Adrenal gland (tissue), 19 donors: ENCODE measurements at regions of chr5 and their contacts with region 1.

Region 1: GRCh38 chr5:165209086-165209727 is 1703.8 kb downstream of the MAT2B start:
- DNase-seq: no peak
- H3K4me3 ChIP-seq: no peak overlapping the region
- H3K27ac ChIP-seq: no peak overlapping the region
- H3K4me1 ChIP-seq: no peaks in the 10 kb centered on the region
- H3K27me3 ChIP-seq: no peaks in the 10 kb centered on the region
- CTCF ChIP-seq: peak; percentile 18 to 70 (median 58)
- POLR2A ChIP-seq: no peak

Region 2: DNA sequence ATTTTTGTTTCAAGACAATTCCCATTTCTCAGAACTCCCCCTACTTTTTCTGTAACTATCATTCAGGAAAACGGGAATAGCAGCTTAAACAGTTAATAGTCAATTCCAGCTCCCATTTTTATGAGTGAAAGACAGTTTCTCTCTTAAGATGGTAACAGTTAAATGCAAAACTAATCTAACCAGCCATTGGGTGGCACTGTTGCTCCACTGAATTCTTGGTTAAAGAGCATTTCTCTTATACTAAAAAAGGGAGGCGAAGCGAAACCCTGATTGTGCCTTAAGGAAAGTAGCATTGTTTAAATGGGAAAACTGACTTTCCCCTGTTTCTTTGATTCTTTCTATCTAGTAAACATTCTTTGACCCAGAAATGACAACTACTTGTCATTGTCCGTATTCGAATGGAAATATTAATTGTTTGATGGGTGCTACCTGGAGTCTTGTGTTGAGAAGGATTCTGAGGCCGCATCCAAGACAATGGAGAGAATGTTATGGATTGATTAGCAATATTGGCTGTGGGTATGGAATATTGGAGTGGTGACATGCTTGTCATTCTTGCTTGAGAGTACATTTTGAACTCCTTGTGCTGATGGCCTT is 1196.0 kb before region 1 on chr5:
- intact Hi-C with region 1: loop called in 1 of 2 experiments (anchors 5 kb)
- DNase-seq: peak; percentile 36 to 82 (median 62)
- H3K4me3 ChIP-seq: no peak overlapping the region
- H3K27ac ChIP-seq: no peak overlapping the region
- H3K4me1 ChIP-seq: no peaks in the 10 kb centered on the region
- H3K27me3 ChIP-seq: no peaks in the 10 kb centered on the region
- CTCF ChIP-seq: peak; percentile 47 to 82 (median 74)
- POLR2A ChIP-seq: no peak

Region 3: GRCh38 chr5:165508861-165509260 is 299.7 kb after region 1 on chr5:
- intact Hi-C with region 1: no loop called
- DNase-seq: no peak
- H3K4me3 ChIP-seq: no peak overlapping the region
- H3K27ac ChIP-seq: no peak overlapping the region
- H3K4me1 ChIP-seq: no peaks in the 10 kb centered on the region
- H3K27me3 ChIP-seq: no peaks in the 10 kb centered on the region
- CTCF ChIP-seq: peak in 1 of 6 experiments; percentile 13
- POLR2A ChIP-seq: no peak